Activated CD4-positive, alpha-beta T cell treated with anti-CD3 and anti-CD28 coated beads for 36 hours (primary cell): ENCODE measurements at regions of chr1 and their contacts with region 1.

Region 1: DNA sequence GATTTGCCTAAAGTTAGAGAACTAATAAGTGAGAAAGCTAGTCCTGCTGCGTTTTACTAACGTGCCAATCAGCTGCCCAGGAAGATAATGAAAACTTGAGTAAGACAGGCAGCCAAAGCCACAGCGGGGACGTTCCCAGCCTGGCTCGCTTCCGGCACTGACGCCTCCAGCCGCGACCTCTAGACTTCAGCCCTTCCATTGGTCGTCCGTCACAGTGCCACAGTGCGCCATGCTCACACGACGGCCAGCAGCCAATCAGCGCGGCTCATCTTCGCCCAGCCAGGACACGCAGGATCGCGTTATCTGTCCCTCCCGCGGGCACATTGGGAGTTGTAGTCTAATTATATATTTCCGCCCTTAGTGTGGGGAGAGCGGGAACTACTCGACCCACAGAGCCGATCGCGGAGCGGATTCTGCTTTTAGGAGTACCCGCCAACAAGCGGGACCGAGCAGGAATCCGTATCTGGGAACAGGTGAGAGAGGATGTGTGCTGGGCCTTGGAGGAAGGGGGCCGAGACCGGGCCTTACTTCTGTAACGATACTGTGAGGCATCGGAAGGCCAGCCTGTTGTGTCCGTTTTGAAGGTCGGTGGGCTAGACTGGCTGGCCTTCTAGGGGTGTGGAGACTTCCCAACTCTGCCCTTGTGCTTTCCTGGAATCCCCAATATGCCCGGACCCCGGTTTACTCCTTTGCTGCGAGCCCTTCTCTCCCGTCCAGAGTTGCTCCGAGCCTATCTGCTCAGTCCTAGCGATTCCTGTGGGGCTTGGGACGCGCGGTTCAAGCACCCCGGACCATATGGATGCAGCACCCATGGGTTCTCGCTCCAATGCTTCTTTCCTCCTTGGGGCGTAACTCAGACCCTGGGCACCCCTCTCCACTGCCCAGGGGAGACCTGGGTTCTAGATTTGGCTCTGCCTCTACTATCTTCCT is at the start of gene FDPS:
- DNase-seq: peak; percentile 99
- ATAC-seq: peak; percentile 99
- H3K4me3 Mint-ChIP-seq: peak within 1 kb of the TSS; percentile 88
- H3K27ac Mint-ChIP-seq: peak within 1 kb of the TSS; percentile 98
- H3K4me1 Mint-ChIP-seq: peaks cover 34% of the 10 kb centered on the region
- H3K27me3 Mint-ChIP-seq: no peaks in the 10 kb centered on the region
- total RNA-seq, gene FDPS: 255 to 354 TPM

Region 2: DNA sequence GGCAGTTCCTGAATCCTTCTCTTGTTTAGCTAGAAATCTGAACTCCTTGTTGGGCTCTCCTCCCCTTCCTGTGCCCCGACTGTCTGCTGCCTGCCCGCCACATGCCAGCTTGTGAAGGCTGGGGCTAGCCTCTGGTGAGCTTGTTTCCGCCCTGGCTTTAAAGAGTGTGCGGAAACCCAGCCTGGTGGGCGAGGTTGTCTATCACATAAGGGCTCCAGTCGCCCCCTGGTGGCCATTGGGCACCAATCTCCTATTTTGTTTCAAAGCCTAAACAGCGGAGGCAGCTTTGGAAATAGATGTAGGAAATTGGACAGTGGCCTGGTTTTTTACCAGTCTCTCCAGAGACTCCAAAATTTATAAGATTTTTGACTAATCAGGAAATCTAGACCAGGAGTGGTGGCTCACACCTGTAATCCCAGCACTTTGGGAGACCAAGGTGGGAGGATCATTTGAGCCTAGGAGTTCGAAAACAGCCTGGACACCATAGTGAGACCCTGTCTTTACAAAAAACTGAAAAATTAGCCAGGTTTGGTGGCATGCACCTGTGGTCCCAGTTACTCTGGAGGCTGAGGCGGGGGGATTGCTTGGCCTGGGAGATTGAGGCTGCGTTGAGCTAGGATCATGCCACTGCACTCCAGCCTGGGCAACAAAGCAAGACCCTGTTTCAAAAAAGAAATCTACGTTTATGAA is 973.6 kb before region 1 on chr1:
- CTCF ChIA-PET with region 1: no interaction called
- POLR2A ChIA-PET with region 1: no interaction called
- intact Hi-C with region 1: no loop called
- DNase-seq: peak; percentile 97
- ATAC-seq: peak; percentile 95
- H3K4me3 Mint-ChIP-seq: no peak overlapping the region
- H3K27ac Mint-ChIP-seq: peak overlapping the region; percentile 92
- H3K4me1 Mint-ChIP-seq: peaks cover 64% of the 10 kb centered on the region
- H3K27me3 Mint-ChIP-seq: no peaks in the 10 kb centered on the region

Region 3: GRCh38 chr1:155193275-155193990 is 115.3 kb before region 1 on chr1:
- CTCF ChIA-PET with region 1: interaction called, 3 read pairs
- POLR2A ChIA-PET with region 1: no interaction called
- intact Hi-C with region 1: loop called in 1 of 2 experiments (anchors 1 kb)
- DNase-seq: peak; percentile 89
- ATAC-seq: peak; percentile 62
- H3K4me3 Mint-ChIP-seq: peak overlapping the region; percentile 94
- H3K27ac Mint-ChIP-seq: peak overlapping the region; percentile 96
- H3K4me1 Mint-ChIP-seq: peaks cover 31% of the 10 kb centered on the region
- H3K27me3 Mint-ChIP-seq: no peaks in the 10 kb centered on the region

Region 4: GRCh38 chr1:155250633-155251449 is 57.9 kb before region 1 on chr1:
- CTCF ChIA-PET with region 1: interaction called, 17 read pairs
- POLR2A ChIA-PET with region 1: interaction called, 4 read pairs
- intact Hi-C with region 1: loop called in 1 of 2 experiments (anchors 1 kb)
- DNase-seq: peak; percentile 99
- ATAC-seq: peak; percentile 96
- H3K4me3 Mint-ChIP-seq: peak overlapping the region; percentile 38
- H3K27ac Mint-ChIP-seq: peak overlapping the region; percentile 31
- H3K4me1 Mint-ChIP-seq: peaks cover 25% of the 10 kb centered on the region
- H3K27me3 Mint-ChIP-seq: no peaks in the 10 kb centered on the region

Region 5: DNA sequence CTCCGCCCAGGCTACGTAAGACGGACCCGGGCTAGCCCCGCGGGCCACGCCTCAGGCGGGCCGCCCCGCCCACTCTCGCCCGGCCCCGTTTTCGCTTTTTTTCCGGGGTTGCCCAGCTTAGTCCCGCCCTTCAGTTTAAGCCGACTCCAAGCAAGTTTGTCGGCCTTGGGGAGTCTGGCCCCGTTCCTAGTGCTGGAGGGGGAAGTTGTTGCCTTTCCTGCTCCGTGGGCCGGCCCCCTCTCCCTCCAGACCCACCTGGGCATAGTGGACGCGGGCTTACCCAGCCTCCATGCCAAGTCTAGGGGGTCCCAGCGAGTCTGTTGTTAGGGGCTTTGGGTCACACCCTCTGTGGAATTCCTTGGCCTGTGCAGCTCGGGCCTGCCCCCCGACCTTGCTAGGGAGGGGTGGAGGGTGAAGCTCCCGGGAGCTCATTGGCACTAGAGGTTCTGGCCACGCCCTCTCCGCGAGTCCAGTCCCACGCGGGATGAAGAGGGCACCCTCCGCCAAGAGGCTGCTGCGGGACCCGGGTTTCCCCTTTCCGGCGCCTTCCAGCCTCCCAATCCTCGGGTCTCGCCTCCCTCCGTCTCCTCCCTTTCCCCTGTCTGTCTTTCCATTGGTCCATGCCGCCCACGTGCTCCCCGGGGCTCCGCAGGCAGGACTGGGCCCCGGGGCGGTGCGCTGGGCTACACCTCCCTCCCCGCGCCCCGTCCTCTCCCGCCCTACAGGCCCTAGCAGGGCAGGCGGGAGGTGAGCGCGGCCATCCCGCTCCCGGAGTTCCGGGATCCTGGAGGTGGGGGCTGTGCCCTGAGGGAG is 15.2 kb after region 1 on chr1:
- CTCF ChIA-PET with region 1: interaction called, 28 read pairs
- POLR2A ChIA-PET with region 1: interaction called, 4 read pairs
- intact Hi-C with region 1: loop called (anchors 1 kb)
- DNase-seq: peak; percentile 95
- ATAC-seq: peak; percentile 81
- H3K4me3 Mint-ChIP-seq: peak overlapping the region; percentile 76
- H3K27ac Mint-ChIP-seq: peak overlapping the region; percentile 45
- H3K4me1 Mint-ChIP-seq: peaks cover 40% of the 10 kb centered on the region
- H3K27me3 Mint-ChIP-seq: no peaks in the 10 kb centered on the region

Region 6: GRCh38 chr1:156020292-156021089 is 711.7 kb after region 1 on chr1 and contains the start of gene SSR2:
- CTCF ChIA-PET with region 1: no interaction called
- POLR2A ChIA-PET with region 1: no interaction called
- intact Hi-C with region 1: loop called in 1 of 2 experiments (anchors 10 kb)
- DNase-seq: peak; percentile 92
- ATAC-seq: peak; percentile 100
- H3K4me3 Mint-ChIP-seq: peak within 1 kb of the TSS; percentile 94
- H3K27ac Mint-ChIP-seq: peak within 1 kb of the TSS; percentile 96
- H3K4me1 Mint-ChIP-seq: peaks cover 20% of the 10 kb centered on the region
- H3K27me3 Mint-ChIP-seq: peaks cover 4% of the 10 kb centered on the region
- total RNA-seq, gene SSR2: 143 to 197 TPM